Right ventricle myocardium superior (tissue), 1 donor: ENCODE measurements at regions of chr7 and their contacts with region 1.

Region 1: GRCh38 chr7:77536413-77537135 is 521 bp upstream of the PTPN12 start:
- DNase-seq: peak; percentile 98
- ATAC-seq: peak; percentile 94

Region 2: DNA sequence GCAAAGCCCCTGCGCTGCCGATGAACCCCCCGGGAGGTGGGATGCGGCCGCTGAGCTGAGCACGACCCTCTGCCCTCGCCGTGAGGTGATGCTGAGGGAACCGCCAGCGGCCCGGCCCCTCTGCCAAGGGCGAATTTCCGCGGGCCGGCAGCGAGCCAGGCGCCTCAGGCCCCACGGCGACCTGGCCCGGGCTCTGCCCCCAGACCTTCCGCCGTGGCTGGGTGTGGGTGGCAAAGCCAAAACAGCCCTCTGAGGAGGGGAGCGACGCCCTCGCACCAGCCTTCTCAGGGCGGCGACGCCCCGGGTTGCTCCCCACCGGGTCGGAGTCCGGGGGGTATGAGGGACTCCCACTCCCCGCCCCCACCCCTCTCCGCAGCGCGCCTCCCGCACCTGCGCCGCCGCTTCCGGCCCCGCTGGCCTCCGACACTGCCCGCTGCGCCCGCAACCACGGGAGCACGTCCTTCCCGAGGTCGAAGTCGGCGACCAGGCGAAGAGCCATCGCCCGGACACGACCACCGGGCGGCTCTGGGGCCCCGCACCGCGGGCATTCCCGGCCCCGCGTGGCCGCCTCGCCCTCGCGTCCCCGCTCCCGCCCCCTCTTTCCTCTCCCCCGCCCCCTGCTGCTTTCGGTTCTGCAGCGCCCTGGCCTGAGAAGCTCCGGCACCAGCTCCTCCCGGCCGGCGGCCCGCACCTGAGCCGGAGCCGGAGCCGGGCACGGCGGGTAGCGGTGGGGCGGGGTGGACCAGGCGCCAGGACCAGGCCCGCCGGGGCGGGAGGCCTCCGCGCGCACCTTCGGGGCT is 120.6 kb before region 1 on chr7 and contains the start of gene GSAP:
- intact Hi-C with region 1: loop called (anchors 10 kb)
- DNase-seq: peak; percentile 79
- ATAC-seq: peak; percentile 90
- total RNA-seq, gene GSAP: 8.0 TPM

Region 3: GRCh38 chr7:77488986-77489385 is 47.6 kb before region 1 on chr7:
- intact Hi-C with region 1: no loop called
- DNase-seq: no peak
- ATAC-seq: no peak

Region 4: GRCh38 chr7:77501192-77501515 is 35.4 kb before region 1 on chr7:
- intact Hi-C with region 1: no loop called
- DNase-seq: no peak
- ATAC-seq: no peak

Region 5: DNA sequence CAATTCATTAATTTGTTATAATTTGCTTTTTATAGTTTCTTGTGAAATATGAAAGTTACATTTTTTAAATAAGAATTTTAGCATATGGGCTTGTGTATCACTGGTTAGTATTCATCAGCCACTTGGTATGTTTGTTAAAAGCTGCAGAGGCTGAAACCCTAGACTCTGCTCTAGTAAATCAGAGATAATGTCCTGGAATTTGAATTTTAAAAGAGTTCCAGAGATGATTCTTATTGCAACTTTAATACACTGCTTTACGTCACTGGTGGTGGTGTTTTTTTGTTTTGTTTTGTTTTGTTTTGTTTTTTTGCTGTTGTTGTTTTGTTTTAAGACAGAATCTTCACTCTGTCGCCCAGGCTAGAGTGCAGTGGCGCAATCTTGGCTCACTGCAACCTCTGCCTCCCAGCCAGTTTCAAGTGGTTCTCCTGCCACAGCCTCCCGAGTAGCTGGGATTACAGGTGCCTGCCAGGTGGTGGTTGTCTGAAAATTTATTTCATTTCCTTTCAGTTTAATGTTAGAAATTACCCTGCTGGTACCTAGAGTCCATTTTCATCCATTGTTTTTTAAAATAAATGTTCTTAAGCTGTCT is 44.3 kb after region 1 on chr7:
- intact Hi-C with region 1: no loop called
- DNase-seq: no peak
- ATAC-seq: no peak